Endothelial cell of umbilical vein (primary cell): ENCODE measurements at regions of chr7 and their contacts with region 1.

Region 1: GRCh38 chr7:13518738-13519137 is 470.7 kb downstream of the ETV1 start:
- DNase-seq: no peak
- H3K4me3 ChIP-seq: no peak overlapping the region
- H3K27ac ChIP-seq: no peak overlapping the region
- H3K4me1 ChIP-seq: no peaks in the 10 kb centered on the region
- H3K27me3 ChIP-seq: no peaks in the 10 kb centered on the region
- CTCF ChIP-seq: no peak
- POLR2A ChIP-seq: no peak

Region 2: GRCh38 chr7:14685167-14685566 is 1166.4 kb after region 1 on chr7:
- CTCF ChIA-PET with region 1: interaction called, 30 read pairs
- POLR2A ChIA-PET with region 1: no interaction called
- dilution Hi-C with region 1: no loop called
- intact Hi-C with region 1: loop called (anchors 5 kb)
- DNase-seq: no peak
- H3K4me3 ChIP-seq: no peak overlapping the region
- H3K27ac ChIP-seq: no peak overlapping the region
- H3K4me1 ChIP-seq: peaks cover 8% of the 10 kb centered on the region
- H3K27me3 ChIP-seq: no peaks in the 10 kb centered on the region
- CTCF ChIP-seq: no peak
- POLR2A ChIP-seq: no peak